ENCODE measurements at regions of chr16 and their contacts with region 1.

Region 1: DNA sequence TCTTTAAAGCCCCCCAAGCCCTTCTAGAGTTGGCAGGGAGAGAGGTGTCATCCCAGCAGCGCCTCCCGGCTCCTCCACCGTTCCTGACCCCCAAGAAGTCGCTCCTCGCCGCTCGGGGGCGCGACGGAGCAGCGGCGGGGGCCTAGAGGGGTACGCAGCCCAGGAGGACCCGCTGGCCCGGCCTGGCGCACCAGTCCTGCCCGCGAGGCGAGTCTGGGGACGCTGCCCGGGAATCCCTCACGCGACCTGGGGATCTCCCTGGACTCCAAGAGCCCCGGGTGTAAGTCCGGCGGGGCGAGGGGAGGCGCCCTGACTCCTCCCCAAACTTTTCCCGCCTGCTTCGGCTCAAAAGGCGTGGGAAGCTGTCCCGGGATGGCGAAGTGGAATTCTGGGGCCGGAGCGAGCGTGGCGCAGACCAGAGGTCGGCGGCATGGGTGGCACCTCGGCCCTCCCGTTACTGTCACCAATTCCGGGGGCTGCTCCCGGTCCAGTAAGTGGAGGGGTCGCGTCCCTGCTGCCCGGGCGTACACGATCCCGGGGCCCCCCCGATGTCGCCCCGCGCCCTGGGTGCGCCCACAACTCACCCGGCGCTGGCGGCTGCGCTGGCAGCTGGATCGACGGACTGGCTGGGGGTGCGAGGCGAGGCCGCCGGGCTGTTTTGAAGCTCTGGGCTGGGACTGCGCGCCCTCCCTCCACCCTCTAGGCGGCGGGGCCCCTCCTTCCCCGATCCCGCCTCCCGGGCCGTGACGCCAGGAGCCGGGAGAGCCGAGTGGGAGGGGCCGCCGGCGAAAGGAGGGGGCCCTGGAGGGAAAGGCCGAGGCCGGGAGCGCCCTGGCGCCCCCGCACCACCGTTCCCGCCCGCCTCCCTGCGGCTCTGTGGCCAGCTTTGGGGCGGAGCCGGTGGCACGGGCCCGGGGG is at the start of gene EMP2:
- DNase-seq: peak; percentile 88 to 92 (median 91)
- H3K4me3 ChIP-seq: peak within 1 kb of the TSS; percentile 84
- H3K27ac ChIP-seq: peak within 1 kb of the TSS; percentile 94 to 99
- H3K4me1 ChIP-seq: peaks cover 24% of the 10 kb centered on the region
- H3K27me3 ChIP-seq: no peaks in the 10 kb centered on the region
- CTCF ChIP-seq: peak; percentile 50 to 83 (median 83)
- EP300 ChIP-seq: no peak
- POLR2A ChIP-seq: peak; percentile 86
- total RNA-seq, gene EMP2: 38.9 to 97.7 (median 83.0) TPM

Region 2: GRCh38 chr16:10521681-10522274 is 58.4 kb before region 1 on chr16:
- intact Hi-C with region 1: loop called in 1 of 4 experiments (anchors 10 kb)
- DNase-seq: peak in 4 of 5 donors; percentile 47 to 74 (median 63)
- H3K4me3 ChIP-seq: no peak overlapping the region
- H3K27ac ChIP-seq: no peak overlapping the region
- H3K4me1 ChIP-seq: peaks cover 1% of the 10 kb centered on the region
- H3K27me3 ChIP-seq: no peaks in the 10 kb centered on the region
- CTCF ChIP-seq: peak in 2 of 3 donors; percentile 70 to 73
- EP300 ChIP-seq: no peak
- POLR2A ChIP-seq: no peak

Region 3: DNA sequence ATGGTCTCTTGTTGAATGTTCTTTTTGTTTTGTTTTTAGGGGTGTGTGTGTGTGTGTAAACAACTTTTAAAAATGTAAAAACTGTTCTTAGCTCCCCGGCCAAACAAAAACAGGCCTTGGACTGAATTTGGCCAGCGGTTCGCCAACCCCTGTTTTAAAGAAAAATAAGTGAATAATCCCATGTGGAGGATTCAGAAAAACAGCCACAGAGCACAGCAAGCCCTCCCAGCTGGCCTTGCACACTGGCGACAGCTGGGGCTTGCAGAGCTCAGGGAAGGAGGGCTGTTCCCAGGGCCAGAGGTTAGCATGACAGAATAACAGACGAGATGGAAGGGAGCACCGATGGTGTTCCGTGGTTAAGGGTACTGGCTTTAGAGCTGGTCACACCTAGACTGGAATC is 38.9 kb before region 1 on chr16:
- intact Hi-C with region 1: loop called in 1 of 4 experiments (anchors 5 kb)
- DNase-seq: peak; percentile 29 to 73 (median 50)
- H3K4me3 ChIP-seq: no peak overlapping the region
- H3K27ac ChIP-seq: peak overlapping the region in 1 of 2 donors; percentile 74
- H3K4me1 ChIP-seq: peaks cover 16% of the 10 kb centered on the region
- H3K27me3 ChIP-seq: no peaks in the 10 kb centered on the region
- CTCF ChIP-seq: no peak
- EP300 ChIP-seq: no peak
- POLR2A ChIP-seq: no peak

Region 4: DNA sequence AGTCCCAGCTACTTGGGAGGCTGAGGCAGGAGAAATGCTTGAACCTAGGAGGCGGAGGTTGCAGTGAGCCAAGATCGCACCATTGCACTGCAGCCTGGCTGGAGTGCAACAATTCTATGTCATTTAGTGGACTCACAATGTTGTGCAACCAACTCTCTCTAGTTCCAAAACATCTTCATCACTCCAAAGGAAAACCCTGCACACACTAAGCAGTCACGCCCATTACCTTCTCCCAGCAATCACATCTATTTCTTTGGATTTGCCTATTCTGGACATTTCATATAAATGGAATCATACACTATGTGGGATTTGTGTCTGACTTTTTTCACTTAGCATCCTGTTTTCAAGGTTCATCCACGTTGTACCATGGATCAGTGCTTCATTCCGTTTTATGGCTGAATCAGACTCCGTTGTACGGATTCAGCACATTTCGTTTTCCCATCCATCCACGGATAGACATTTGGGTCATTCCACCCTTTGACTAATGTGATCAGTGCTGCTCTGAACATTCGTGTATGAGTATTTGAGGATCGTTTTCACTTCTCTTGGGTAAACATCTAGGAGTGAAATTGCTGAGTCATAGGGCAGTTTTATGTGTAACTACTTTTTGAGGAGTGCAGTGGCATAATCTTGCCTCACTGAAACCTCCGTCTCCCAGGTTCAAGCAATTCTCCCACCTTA is 45.5 kb after region 1 on chr16:
- intact Hi-C with region 1: no loop called
- DNase-seq: no peak
- H3K4me3 ChIP-seq: no peak overlapping the region
- H3K27ac ChIP-seq: no peak overlapping the region
- H3K4me1 ChIP-seq: no peaks in the 10 kb centered on the region
- H3K27me3 ChIP-seq: no peaks in the 10 kb centered on the region
- CTCF ChIP-seq: no peak
- EP300 ChIP-seq: no peak
- POLR2A ChIP-seq: no peak